WTC11 (cell line): ENCODE measurements at regions of chr13 and their contacts with region 1.

Region 1: DNA sequence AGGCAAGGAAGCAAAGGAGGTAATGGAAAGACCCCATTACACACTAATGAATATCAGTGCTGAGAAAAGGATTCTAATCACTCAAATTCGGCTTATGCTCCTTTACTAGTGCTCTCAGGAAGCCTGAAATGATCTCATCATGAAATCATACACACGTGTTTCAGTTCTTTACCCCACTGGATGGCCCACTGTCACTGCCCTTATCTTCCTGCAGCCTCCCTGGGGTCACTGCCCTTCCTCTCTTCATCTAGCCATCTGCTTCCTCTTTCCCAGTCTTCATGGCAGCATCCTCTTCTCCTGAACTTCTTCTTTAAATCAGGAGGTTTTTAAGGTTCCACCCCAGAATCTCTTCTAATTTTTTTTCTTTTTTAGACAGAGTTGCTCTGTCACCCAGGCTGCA is 27.9 kb upstream of the EEF1AKMT1 start:
- DNase-seq: no peak
- ATAC-seq: no peak
- H3K4me3 Mint-ChIP-seq: no peak overlapping the region
- H3K27ac Mint-ChIP-seq: no peak overlapping the region
- H3K4me1 Mint-ChIP-seq: no peaks in the 10 kb centered on the region
- H3K27me3 Mint-ChIP-seq: no peaks in the 10 kb centered on the region
- CTCF ChIP-seq: no peak

Region 2: GRCh38 chr13:21707591-21707990 is 905.9 kb after region 1 on chr13:
- CTCF ChIA-PET with region 1: no interaction called
- POLR2A ChIA-PET with region 1: interaction called, 11 read pairs
- DNase-seq: no peak
- ATAC-seq: no peak
- H3K4me3 Mint-ChIP-seq: no peak overlapping the region
- H3K27ac Mint-ChIP-seq: no peak overlapping the region
- H3K4me1 Mint-ChIP-seq: no peaks in the 10 kb centered on the region
- H3K27me3 Mint-ChIP-seq: no peaks in the 10 kb centered on the region
- CTCF ChIP-seq: no peak